ENCODE measurements at regions of chr7 and their contacts with region 1.

Region 1: DNA sequence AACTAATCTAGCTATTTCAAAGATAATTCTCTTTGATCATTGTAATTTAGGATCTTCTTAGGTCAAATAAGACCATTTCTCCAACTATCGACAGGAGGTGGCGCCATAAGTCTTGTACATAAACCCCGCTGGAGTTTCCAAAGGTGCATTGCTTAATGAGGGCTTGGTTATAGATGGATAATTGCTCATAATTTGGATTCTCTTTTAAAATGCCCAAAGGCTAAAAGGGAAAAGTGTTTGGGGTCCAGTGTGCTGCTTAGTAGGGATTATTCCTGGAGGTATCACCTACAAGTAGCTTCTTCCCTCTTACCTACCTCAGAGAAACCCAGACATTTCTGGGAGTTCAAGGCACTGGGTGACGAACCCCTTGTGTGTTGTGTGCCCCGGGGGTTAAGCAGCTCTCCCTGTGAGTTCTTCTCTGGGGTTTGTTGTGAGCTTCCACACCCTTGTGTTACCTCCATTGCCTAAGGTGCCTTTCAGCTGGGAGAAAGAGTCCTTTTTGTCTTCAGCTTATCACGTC is 75.2 kb downstream of the PAXIP1 start:
- DNase-seq: no peak
- ATAC-seq: peak; percentile 94

Region 2: DNA sequence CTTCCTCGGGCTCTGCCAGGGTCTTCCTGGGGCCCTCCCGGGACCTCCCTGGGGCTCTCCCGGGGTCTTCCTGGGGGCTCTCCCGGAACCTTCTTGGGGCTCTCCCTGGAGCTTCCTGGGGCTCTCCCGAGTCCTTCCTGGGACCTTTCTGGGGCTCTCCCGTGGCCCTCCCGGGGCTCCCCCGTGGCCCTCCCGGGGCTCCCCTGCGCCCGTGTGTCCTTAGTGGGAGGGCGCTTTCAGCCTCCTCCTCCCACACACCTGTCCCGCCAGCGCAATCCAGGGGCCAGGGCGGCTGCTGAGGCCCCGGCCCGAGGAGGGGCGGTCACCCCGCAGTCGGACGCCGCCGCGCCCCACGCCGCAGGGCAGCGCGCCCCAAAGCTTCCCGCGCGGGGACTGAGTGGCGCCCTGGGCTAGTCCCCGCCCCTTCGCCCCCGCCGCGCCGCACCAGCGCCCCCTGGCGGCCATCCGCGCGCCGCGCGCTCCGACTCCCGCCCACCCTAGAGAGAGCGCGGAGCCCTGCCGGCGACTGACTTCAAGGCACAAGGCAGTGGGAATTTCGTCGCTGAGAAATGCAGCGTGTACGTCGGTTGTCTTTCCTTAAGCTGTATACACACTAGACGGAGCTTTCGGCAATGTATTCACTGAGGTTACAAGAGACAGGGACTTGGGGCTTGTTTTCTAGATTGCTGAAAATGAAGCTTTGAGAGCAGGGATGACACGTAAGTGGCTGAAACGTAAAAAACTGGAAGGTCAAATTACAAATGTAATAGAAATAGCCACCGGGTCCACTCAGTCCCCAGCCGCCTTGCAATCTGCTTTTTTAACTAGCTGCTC is 417.1 kb after region 1 on chr7:
- intact Hi-C with region 1: loop called (anchors 2 kb)
- DNase-seq: peak; percentile 88
- ATAC-seq: peak; percentile 99